PC-9 (cell line): ENCODE measurements at regions of chr22 and their contacts with region 1.

Region 1: GRCh38 chr22:22201185-22201929 is 43.2 kb upstream of the VPREB1 start:
- DNase-seq: no peak
- H3K4me3 ChIP-seq: no peak overlapping the region
- H3K27ac ChIP-seq: no peak overlapping the region
- H3K4me1 ChIP-seq: no peaks in the 10 kb centered on the region
- H3K27me3 ChIP-seq: peaks cover 30% of the 10 kb centered on the region; the same call in 1 of the 2 replicates
- CTCF ChIP-seq: peak; percentile 39; the same call in 1 of the 2 replicates

Region 2: DNA sequence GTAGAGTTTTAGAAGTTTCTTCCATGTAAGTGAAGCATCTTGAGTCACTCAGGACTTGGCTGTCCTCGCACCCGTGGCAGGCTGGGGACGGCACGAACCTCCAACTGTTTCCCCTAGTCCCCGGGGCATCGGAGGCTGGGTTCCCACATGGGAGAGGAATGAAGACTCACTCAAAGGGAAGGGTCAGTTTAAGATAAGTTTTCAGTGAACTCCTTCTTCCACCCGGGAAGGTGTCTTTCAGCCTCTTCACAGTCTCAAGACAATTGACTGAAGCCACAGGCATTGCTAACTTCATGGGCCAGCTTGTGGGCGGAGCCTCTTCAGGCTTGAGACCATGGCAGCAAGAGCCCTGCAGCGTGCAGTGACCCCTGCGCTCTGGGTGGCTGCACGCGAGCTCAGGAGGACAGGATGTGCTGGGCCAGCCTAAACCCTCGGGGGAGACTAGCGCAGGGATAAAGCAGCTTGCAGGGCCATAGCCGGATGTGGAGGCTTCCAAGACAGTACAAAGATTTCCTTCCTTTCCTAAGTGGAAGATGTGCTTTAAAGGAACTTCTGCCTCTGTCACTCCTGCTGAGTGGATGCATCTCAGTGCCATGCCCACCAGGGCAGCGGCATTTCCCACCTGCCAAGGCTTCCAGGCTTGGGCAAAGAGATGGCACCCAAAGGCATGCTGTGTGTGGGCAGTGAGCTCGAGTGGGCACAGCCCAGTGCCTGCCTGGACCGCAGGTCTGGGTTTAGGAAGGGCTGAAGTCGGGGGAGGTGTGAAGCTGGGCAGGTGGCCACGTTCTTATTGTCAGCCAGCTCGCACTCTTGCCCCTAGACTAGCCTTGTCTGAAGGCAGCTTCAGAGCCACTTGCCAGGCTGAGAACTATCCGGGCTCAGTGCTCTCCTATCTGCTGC is 502.7 kb before region 1 on chr22:
- CTCF ChIA-PET with region 1: no interaction called
- POLR2A ChIA-PET with region 1: no interaction called
- intact Hi-C with region 1: no loop called
- DNase-seq: no peak
- H3K4me3 ChIP-seq: no peak overlapping the region
- H3K27ac ChIP-seq: no peak overlapping the region
- H3K4me1 ChIP-seq: no peaks in the 10 kb centered on the region
- H3K27me3 ChIP-seq: no peaks in the 10 kb centered on the region
- CTCF ChIP-seq: no peak

Region 3: GRCh38 chr22:21735200-21736076 is 465.9 kb before region 1 on chr22 and contains the start of gene YPEL1:
- CTCF ChIA-PET with region 1: no interaction called
- POLR2A ChIA-PET with region 1: interaction called, 18 read pairs
- intact Hi-C with region 1: no loop called
- DNase-seq: peak; percentile 61 to 92
- H3K4me3 ChIP-seq: peak within 1 kb of the TSS; percentile 57
- H3K27ac ChIP-seq: no peak within 1 kb of the TSS
- H3K4me1 ChIP-seq: peaks cover 9% of the 10 kb centered on the region; the same call in 1 of the 2 replicates
- H3K27me3 ChIP-seq: no peaks in the 10 kb centered on the region
- CTCF ChIP-seq: no peak
- total RNA-seq, gene YPEL1: 5.2 and 8.3 TPM in 2 replicates

Region 4: GRCh38 chr22:21889251-21889990 is 311.9 kb before region 1 on chr22:
- CTCF ChIA-PET with region 1: no interaction called
- POLR2A ChIA-PET with region 1: no interaction called
- intact Hi-C with region 1: no loop called
- DNase-seq: no peak
- H3K4me3 ChIP-seq: no peak overlapping the region
- H3K27ac ChIP-seq: no peak overlapping the region
- H3K4me1 ChIP-seq: no peaks in the 10 kb centered on the region
- H3K27me3 ChIP-seq: no peaks in the 10 kb centered on the region
- CTCF ChIP-seq: no peak

Region 5: DNA sequence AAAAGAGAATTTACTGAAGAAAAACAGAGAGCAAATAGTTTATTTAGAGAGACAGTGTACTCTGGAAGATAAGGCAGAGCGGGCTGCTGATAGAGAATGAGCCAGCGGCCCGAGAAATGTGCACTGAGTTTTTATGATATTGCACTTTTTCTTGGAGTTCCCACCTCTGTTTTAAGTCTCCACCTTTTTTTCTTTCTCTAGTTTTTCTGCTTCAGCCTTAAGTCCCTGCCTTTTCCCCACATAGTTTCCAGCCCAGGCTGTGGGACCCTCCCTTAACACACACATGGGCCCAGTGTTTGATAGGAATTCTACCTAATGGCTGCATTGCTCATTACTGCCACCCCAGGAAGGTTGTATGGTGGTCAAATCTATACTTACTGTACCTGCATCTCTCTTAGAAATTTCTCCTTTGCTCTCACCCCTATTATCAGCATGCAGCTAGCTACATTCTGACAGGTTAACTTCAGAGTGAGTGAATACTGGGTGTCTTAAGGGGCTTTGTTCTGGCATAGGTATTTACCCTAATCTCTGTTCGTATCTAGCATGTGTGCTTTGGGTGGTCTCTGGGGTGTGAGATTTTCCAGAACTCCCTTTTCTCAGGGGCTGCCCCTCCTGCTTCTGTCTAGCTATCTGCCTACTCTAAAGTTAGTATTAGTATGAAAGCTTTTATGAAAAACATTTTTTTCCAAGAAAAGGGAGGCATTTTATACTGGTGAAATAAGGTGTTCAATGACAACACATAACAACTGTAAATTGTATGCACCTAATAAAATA is 91.5 kb before region 1 on chr22:
- CTCF ChIA-PET with region 1: no interaction called
- POLR2A ChIA-PET with region 1: interaction called, 10 read pairs
- intact Hi-C with region 1: no loop called
- DNase-seq: no peak
- H3K4me3 ChIP-seq: no peak overlapping the region
- H3K27ac ChIP-seq: no peak overlapping the region
- H3K4me1 ChIP-seq: no peaks in the 10 kb centered on the region
- H3K27me3 ChIP-seq: peaks cover 13% of the 10 kb centered on the region; the same call in 1 of the 2 replicates
- CTCF ChIP-seq: no peak

Region 6: GRCh38 chr22:22408731-22409696 is 207.7 kb after region 1 on chr22:
- CTCF ChIA-PET with region 1: no interaction called
- POLR2A ChIA-PET with region 1: no interaction called
- intact Hi-C with region 1: no loop called
- DNase-seq: no peak
- H3K4me3 ChIP-seq: no peak overlapping the region
- H3K27ac ChIP-seq: no peak overlapping the region
- H3K4me1 ChIP-seq: no peaks in the 10 kb centered on the region
- H3K27me3 ChIP-seq: peaks cover 27% of the 10 kb centered on the region
- CTCF ChIP-seq: peak; percentile 35; the same call in 1 of the 2 replicates

Region 7: GRCh38 chr22:22487869-22488597 is 286.7 kb after region 1 on chr22:
- CTCF ChIA-PET with region 1: interaction called, 10 read pairs
- POLR2A ChIA-PET with region 1: no interaction called
- intact Hi-C with region 1: no loop called
- DNase-seq: no peak
- H3K4me3 ChIP-seq: no peak overlapping the region
- H3K27ac ChIP-seq: no peak overlapping the region
- H3K4me1 ChIP-seq: no peaks in the 10 kb centered on the region
- H3K27me3 ChIP-seq: no peaks in the 10 kb centered on the region
- CTCF ChIP-seq: no peak